ENCODE measurements at regions of chr7 and their contacts with region 1.

Region 1: DNA sequence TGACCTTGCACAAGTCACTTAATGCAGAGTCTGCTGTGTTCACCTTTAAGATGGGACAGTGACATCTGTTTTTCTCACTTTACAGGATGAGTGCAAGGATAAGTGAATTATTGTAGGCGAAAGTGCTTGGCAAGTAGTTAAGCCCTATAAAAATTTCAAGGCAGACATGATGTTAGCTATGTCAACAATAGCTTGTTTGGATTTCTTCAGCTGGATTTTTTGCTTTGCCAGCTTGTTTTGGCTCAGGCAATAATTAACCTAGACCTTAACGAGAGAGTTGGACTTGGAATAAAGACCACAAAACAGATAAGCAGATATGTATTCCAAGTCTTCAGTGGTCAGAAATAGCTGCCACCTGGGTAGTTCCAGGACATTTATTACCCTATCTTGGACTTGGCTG is 255.2 kb downstream of the ARL4A start:
- DNase-seq: no peak
- ATAC-seq: no peak
- H3K4me3 ChIP-seq: no peak overlapping the region
- H3K27ac ChIP-seq: no peak overlapping the region
- H3K4me1 ChIP-seq: no peaks in the 10 kb centered on the region
- H3K27me3 ChIP-seq: no peaks in the 10 kb centered on the region
- CTCF ChIP-seq: no peak

Region 2: GRCh38 chr7:13132314-13132713 is 189.7 kb after region 1 on chr7:
- intact Hi-C with region 1: no loop called
- DNase-seq: no peak
- ATAC-seq: no peak
- H3K4me3 ChIP-seq: no peak overlapping the region
- H3K27ac ChIP-seq: no peak overlapping the region
- H3K4me1 ChIP-seq: no peaks in the 10 kb centered on the region
- H3K27me3 ChIP-seq: no peaks in the 10 kb centered on the region
- CTCF ChIP-seq: no peak

Region 3: DNA sequence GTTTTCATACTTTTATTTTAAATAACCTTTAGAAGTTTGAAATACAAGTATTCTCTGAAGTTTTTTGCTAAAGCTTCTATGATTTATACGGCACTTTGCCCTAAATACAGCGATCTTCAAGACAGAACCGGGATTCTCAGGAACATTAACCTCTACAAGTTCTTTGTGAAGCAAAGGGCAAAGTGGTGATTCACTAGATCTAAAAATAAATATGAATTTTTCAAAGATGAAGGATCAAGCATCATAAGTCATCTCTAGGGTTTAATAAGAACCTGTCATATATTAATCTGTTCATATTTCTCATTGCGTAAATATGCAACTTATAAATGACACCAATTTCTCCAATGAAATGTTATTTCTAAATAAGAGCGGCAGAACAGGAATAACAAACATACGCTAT is 1929.3 kb after region 1 on chr7:
- intact Hi-C with region 1: loop called in 1 of 2 experiments (anchors 5 kb)
- DNase-seq: no peak
- ATAC-seq: peak in 1 of 4 donors; percentile 25
- H3K4me3 ChIP-seq: no peak overlapping the region
- H3K27ac ChIP-seq: no peak overlapping the region
- H3K4me1 ChIP-seq: no peaks in the 10 kb centered on the region
- H3K27me3 ChIP-seq: no peaks in the 10 kb centered on the region
- CTCF ChIP-seq: no peak

Measured in psoas muscle (tissue), 8 donors.